Aorta (tissue), 5 donors: ENCODE measurements at regions of chr4 and their contacts with region 1.

Region 1: GRCh38 chr4:88366460-88366859 is 12.2 kb upstream of the HERC6 start:
- DNase-seq: no peak
- ATAC-seq: no peak
- H3K4me3 ChIP-seq: no peak overlapping the region
- H3K27ac ChIP-seq: no peak overlapping the region
- H3K4me1 ChIP-seq: no peaks in the 10 kb centered on the region
- H3K27me3 ChIP-seq: no peaks in the 10 kb centered on the region

Region 2: GRCh38 chr4:88223516-88223915 is 142.9 kb before region 1 on chr4:
- intact Hi-C with region 1: loop called in 1 of 2 experiments (anchors 5 kb)
- DNase-seq: no peak
- ATAC-seq: no peak
- H3K4me3 ChIP-seq: no peak overlapping the region
- H3K27ac ChIP-seq: no peak overlapping the region
- H3K4me1 ChIP-seq: peaks cover 3% of the 10 kb centered on the region in 2 donors
- H3K27me3 ChIP-seq: no peaks in the 10 kb centered on the region

Region 3: GRCh38 chr4:88409206-88409605 is 42.7 kb after region 1 on chr4:
- intact Hi-C with region 1: loop called in 1 of 2 experiments (anchors 2 kb)
- DNase-seq: no peak
- ATAC-seq: no peak
- H3K4me3 ChIP-seq: no peak overlapping the region
- H3K27ac ChIP-seq: no peak overlapping the region
- H3K4me1 ChIP-seq: no peaks in the 10 kb centered on the region
- H3K27me3 ChIP-seq: no peaks in the 10 kb centered on the region